ENCODE measurements at regions of chr4 and their contacts with region 1.

Region 1: GRCh38 chr4:184649026-184649970 is at the starts of genes CASP3 and PRIMPOL:
- DNase-seq: peak; percentile 96 to 98 (median 97)
- H3K4me3 ChIP-seq: peak within 1 kb of the TSS; percentile 44 to 96 (median 91)
- H3K27ac ChIP-seq: peak within 1 kb of the TSS; percentile 94 to 99 (median 98)
- H3K4me1 ChIP-seq: peaks cover 35 to 45% of the 10 kb centered on the region in 2 donors
- H3K27me3 ChIP-seq: no peaks in the 10 kb centered on the region
- CTCF ChIP-seq: peak in 3 of 6 experiments; percentile 5 to 37 (median 10)
- POLR2A ChIP-seq: peak; percentile 95 to 97
- total RNA-seq, gene CASP3: 11.2 to 44.5 (median 20.9) TPM
- total RNA-seq, gene PRIMPOL: 7.5 to 24.5 (median 11.4) TPM

Region 2: DNA sequence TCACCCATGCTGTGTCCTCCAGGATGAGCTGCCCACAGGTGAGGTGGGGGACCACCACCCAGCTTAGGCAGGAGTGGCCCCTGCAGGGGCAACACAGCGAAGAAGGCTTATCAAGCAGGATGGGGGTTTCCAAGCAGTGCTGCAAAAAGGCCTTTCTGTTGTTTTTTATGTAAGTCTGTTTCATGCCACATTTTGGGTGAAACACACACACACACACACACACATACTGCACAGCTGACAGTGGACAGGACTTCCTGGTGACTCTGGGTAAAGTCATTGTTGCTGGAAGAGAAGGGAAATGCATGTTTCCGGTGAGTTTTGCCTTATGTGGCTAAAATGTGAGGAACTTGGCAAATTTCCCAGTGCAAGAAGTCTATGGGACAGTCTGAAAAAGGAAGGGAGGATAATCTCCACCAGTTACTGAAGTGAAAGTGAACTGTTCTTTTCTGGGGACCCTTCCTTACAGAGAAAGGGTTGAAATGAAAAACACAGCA is 294.1 kb before region 1 on chr4:
- intact Hi-C with region 1: no loop called
- DNase-seq: peak; percentile 55 to 88 (median 59)
- H3K4me3 ChIP-seq: no peak overlapping the region
- H3K27ac ChIP-seq: peak overlapping the region in 4 of 5 donors; percentile 56 to 88 (median 65)
- H3K4me1 ChIP-seq: peaks cover 7 to 9% of the 10 kb centered on the region in 2 donors
- H3K27me3 ChIP-seq: no peaks in the 10 kb centered on the region
- CTCF ChIP-seq: no peak
- POLR2A ChIP-seq: no peak

Region 3: DNA sequence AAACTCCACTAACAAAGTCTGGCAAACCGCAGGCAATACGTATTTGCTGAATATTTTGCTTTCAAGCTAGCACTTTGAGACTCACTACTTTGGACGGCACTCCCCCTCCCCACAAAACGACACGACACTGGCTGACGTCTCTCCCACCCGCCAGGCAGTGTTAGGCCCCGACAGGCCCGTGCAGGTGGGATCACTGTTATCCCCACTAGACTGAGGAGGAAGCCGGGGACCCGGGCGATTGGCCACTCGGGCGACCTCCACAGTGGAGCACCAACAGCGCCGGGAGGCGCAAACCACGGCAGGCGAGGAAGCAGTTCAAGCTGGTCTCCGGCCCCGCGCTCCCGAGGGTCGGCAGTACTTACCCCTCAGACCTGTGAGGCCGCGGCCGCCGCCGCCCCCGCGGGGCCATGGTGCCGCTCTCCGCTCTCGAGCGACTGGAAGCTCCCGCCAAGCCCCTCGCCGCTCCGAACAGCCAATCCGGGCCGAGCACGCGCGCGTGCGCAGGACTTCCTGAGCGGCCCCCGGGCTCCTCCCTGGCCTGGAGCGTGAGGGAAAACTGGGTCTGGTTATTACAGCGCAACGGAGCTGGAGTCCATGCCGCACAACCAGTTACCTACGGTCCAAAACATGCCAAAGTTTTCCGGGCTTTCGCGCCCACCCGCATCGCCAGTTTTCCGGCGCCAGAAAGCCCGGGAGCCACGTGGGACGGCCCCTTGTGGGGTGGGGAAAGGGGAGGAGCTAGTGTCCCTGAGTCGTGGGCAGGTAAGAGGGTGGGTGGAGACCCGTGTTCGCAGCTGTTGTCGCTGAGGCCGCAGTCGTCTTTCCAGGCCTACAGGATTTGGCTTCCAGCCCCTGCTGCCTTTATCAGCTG is 84.6 kb after region 1 on chr4 and contains the start of gene CENPU:
- intact Hi-C with region 1: loop called in 1 of 2 experiments (anchors 5 kb)
- DNase-seq: peak; percentile 96 to 98 (median 97)
- H3K4me3 ChIP-seq: peak within 1 kb of the TSS in 3 of 4 donors; percentile 58 to 76 (median 61)
- H3K27ac ChIP-seq: peak within 1 kb of the TSS in 3 of 5 donors; percentile 45 to 66 (median 56)
- H3K4me1 ChIP-seq: peaks cover 3 to 12% of the 10 kb centered on the region in 2 donors
- H3K27me3 ChIP-seq: no peaks in the 10 kb centered on the region
- CTCF ChIP-seq: peak in 2 of 6 experiments; percentile 3 to 54
- POLR2A ChIP-seq: peak; percentile 44 to 98
- total RNA-seq, gene CENPU: 0.97 to 15.6 (median 2.2) TPM

Measured in adrenal gland (tissue), 19 donors.